Endothelial cell of umbilical vein (primary cell): ENCODE measurements at regions of chr16 and their contacts with region 1.

Region 1: DNA sequence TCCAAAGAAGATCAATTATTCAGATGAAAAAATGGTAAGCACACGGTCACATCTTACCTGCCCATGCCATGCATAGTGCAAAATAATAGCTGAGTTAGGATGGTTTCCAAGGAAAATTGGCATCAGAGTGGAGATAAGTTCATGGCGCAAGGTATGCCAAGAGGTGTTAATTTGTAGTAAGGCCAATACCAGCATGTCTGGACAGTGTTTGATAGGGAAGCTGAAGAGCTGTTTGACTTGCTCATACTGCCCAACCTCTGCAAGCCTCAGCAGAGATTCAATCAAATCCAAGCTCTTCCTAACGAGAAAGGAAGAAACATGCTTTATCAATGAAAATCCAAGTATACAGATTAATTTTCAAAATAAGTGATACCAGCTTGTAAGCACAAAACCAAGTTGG is 51.0 kb downstream of the CNOT1 start:
- DNase-seq: no peak
- H3K4me3 ChIP-seq: no peak overlapping the region
- H3K27ac ChIP-seq: no peak overlapping the region
- H3K4me1 ChIP-seq: peaks cover 8% of the 10 kb centered on the region
- H3K27me3 ChIP-seq: no peaks in the 10 kb centered on the region
- CTCF ChIP-seq: no peak
- POLR2A ChIP-seq: no peak

Region 2: GRCh38 chr16:58541711-58542110 is 36.9 kb before region 1 on chr16:
- CTCF ChIA-PET with region 1: interaction called, 5 read pairs
- POLR2A ChIA-PET with region 1: no interaction called
- dilution Hi-C with region 1: no loop called
- intact Hi-C with region 1: loop called (anchors 5 kb)
- DNase-seq: no peak
- H3K4me3 ChIP-seq: no peak overlapping the region
- H3K27ac ChIP-seq: no peak overlapping the region
- H3K4me1 ChIP-seq: no peaks in the 10 kb centered on the region
- H3K27me3 ChIP-seq: no peaks in the 10 kb centered on the region
- CTCF ChIP-seq: no peak
- POLR2A ChIP-seq: no peak

Region 3: GRCh38 chr16:58591083-58591482 is 12.4 kb after region 1 on chr16:
- CTCF ChIA-PET with region 1: no interaction called
- POLR2A ChIA-PET with region 1: no interaction called
- dilution Hi-C with region 1: no loop called
- intact Hi-C with region 1: no loop called
- DNase-seq: no peak
- H3K4me3 ChIP-seq: no peak overlapping the region
- H3K27ac ChIP-seq: no peak overlapping the region
- H3K4me1 ChIP-seq: no peaks in the 10 kb centered on the region
- H3K27me3 ChIP-seq: no peaks in the 10 kb centered on the region
- CTCF ChIP-seq: no peak
- POLR2A ChIP-seq: no peak